Pancreas (tissue), 10 donors: ENCODE measurements at regions of chr1 and their contacts with region 1.

Region 1: GRCh38 chr1:24688621-24689195 is 45.6 kb downstream of the SRRM1 start:
- DNase-seq: peak; percentile 49 to 81 (median 67)
- ATAC-seq: peak; percentile 79 to 95 (median 92)
- H3K4me3 ChIP-seq: no peak overlapping the region
- H3K27ac ChIP-seq: no peak overlapping the region
- H3K4me1 ChIP-seq: no peaks in the 10 kb centered on the region
- H3K27me3 ChIP-seq: no peaks in the 10 kb centered on the region
- CTCF ChIP-seq: peak; percentile 50 to 65 (median 56)

Region 2: DNA sequence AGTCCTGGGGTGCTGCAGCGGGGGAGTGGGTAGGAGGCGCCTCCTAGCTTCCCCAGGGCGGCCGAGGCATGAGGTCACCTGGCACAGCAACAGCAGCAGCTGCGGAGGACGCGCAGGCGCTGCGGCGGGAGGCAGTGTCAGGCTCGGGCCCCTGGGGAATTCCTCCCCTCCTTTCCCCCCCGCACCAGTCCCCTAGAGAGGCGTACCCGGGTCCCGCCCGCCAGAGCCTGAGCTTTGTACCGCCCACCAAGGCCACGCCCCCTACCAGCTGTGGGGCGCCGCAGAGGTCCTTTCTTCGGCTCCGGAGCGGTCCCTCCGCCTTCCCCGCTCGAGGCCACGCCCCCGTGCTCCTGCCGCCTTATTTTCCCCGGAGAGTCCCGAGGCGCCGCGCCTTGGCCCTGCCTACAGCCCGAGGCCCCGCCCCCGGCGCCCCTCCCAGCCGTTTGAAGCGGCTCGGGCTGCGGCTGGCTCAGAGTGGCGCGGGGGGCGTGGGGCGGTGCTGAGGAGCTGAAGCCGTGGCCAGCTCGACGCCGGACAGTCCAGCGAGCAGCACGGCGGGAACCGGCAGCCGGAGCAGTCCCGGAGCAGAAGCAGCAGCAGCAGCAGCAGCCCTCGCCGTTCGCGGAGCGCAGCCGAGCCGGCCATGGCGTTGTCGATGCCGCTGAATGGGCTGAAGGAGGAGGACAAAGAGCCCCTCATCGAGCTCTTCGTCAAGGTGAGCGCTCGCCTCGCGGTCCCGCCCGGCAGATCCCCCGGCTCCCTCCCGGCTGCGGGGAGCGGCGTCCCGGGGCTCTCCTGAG is 56.4 kb after region 1 on chr1 and contains the start of gene CLIC4:
- intact Hi-C with region 1: no loop called
- DNase-seq: peak; percentile 100
- ATAC-seq: peak; percentile 92 to 98 (median 94)
- H3K4me3 ChIP-seq: peak within 1 kb of the TSS; percentile 79 to 94 (median 92)
- H3K27ac ChIP-seq: peak within 1 kb of the TSS; percentile 76 to 91 (median 86)
- H3K4me1 ChIP-seq: peaks cover 0 to 4% (median 0%) of the 10 kb centered on the region in 3 donors
- H3K27me3 ChIP-seq: no peaks in the 10 kb centered on the region
- CTCF ChIP-seq: no peak
- total RNA-seq, gene CLIC4: 16.8 to 86.7 (median 35.6) TPM

Region 3: GRCh38 chr1:24779689-24780464 is 91.2 kb after region 1 on chr1:
- intact Hi-C with region 1: no loop called
- DNase-seq: no peak
- ATAC-seq: no peak
- H3K4me3 ChIP-seq: no peak overlapping the region
- H3K27ac ChIP-seq: no peak overlapping the region
- H3K4me1 ChIP-seq: peaks cover 0 to 11% (median 0%) of the 10 kb centered on the region in 3 donors
- H3K27me3 ChIP-seq: no peaks in the 10 kb centered on the region
- CTCF ChIP-seq: no peak

Region 4: GRCh38 chr1:24828887-24829192 is 140.1 kb after region 1 on chr1:
- intact Hi-C with region 1: loop called in 2 of 3 experiments (anchors 5 kb)
- DNase-seq: no peak
- ATAC-seq: no peak
- H3K4me3 ChIP-seq: no peak overlapping the region
- H3K27ac ChIP-seq: no peak overlapping the region
- H3K4me1 ChIP-seq: peaks cover 0 to 6% (median 6%) of the 10 kb centered on the region in 3 donors
- H3K27me3 ChIP-seq: no peaks in the 10 kb centered on the region
- CTCF ChIP-seq: no peak